Prostate gland (tissue), 2 donors: ENCODE measurements at regions of chr1 and their contacts with region 1.

Region 1: DNA sequence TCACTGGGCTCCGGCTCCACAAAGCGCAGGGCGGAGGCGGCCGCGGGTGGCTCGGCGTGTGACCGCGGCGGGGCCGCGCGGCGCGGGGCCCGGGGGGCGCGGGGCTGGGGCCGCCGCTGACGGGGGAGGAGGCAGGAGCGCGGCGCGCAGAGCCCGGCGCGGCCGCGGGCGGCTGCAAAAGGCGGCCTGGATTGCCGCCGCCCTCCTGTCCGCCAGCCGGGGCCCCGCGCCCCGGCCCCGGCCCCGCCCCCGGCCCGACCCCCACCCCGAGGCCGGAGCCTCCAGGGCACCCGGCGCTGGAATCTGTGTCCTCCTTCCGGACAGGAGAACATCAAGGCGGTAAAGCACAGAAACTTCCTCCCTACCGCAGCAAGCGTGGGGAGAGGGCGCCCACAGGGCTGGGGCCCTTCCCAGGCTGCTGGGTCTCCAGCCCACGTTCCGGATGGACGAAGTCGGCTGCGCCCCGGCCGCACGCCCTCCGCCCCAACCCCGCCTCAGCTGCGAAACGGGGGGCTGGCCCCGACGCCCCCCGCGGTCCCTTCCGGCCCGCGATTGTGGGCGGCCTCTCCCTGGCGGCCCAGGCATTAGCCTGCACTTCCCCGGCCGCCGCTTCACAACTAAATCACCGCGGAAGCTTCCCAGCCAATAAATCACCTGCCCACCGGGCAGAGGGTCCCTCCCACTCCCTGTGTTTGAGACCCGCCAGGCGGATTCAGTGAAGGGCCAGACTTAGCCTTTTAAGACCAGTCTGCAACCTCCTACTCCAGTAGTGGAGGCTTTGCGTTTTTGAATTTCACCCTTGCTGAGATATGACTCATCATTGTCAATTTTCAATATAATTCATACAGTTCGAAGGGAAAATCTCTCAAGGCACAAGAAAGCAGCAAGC is 106.0 kb downstream of the SLC45A1 start:
- DNase-seq: no peak
- H3K4me3 ChIP-seq: peak overlapping the region; percentile 79 to 84
- H3K27ac ChIP-seq: peak overlapping the region; percentile 93 to 98
- H3K4me1 ChIP-seq: peaks cover 22% of the 10 kb centered on the region
- H3K27me3 ChIP-seq: no peaks in the 10 kb centered on the region
- CTCF ChIP-seq: peak in 2 of 4 experiments; percentile 27
- POLR2A ChIP-seq: peak; percentile 11

Region 2: DNA sequence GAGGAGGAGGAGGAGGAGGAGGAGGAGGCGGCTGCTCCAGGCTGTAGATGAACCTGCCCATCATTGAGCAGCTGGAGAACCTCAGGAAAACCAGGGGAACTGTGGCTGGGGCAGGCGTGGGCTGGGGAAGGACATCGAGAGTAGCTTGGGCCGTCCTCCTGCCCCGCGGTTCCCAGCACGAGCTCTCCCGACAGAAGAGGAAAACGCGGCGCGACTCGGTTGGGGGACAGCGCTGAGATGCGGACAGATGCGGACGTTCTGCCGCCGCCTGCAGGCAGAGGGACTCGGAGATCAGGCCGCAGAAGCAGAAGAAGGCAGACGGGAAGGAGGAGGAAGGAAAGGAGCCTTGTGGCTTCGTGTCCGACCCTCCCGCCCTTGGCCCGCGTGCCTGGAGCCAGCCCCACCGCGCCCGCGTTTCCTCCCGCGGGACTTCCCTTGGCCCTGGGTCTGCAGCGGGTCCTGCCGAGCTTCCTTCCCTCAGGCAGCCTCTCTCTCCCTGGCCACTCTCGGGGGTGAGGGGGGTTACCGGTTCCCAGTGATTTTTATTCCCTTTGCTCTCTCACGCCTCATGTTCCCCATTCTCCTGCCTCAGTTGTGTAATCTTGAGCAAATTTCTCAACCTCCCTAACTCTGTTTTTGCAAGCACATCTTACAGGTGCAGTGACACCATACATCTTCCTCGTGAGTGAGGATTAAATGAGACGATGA is 481.5 kb before region 1 on chr1:
- intact Hi-C with region 1: no loop called
- DNase-seq: peak; percentile 14
- H3K4me3 ChIP-seq: no peak overlapping the region
- H3K27ac ChIP-seq: no peak overlapping the region
- H3K4me1 ChIP-seq: no peaks in the 10 kb centered on the region
- H3K27me3 ChIP-seq: no peaks in the 10 kb centered on the region
- CTCF ChIP-seq: peak in 2 of 4 experiments; percentile 20 to 27
- POLR2A ChIP-seq: no peak

Region 3: GRCh38 chr1:8364528-8365442 is 59.1 kb before region 1 on chr1:
- intact Hi-C with region 1: loop called (anchors 5 kb)
- DNase-seq: peak; percentile 85
- H3K4me3 ChIP-seq: no peak overlapping the region
- H3K27ac ChIP-seq: peak overlapping the region; percentile 50 to 82
- H3K4me1 ChIP-seq: peaks cover 25% of the 10 kb centered on the region
- H3K27me3 ChIP-seq: no peaks in the 10 kb centered on the region
- CTCF ChIP-seq: no peak
- POLR2A ChIP-seq: no peak

Region 4: DNA sequence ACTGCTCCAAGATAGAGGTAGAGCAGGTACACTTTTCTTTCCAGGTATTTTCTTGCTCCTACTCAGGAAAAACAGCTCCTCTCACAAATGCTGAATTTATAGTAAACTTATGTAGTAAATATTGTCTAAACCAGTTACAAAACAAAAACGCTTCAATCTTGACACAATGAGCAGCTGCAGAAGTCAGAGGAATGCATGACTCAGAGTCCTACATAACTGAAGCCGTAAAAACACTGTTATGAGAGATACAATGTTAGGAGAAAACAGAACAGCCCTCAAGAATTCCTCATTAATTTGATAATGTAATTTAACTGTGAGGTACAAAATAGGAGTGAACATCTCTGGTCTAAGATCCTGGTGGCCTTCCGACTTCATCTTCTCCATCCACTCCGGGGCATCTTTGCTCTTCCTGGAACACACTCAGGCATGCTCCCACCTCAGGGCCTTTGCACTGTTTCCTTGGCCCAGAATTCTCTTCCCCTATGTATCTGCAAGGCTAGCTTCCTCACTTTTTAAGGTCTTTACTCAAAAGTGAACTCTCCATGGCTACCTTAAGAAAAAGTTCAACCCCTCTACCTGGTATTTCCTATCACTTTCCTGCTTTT is 32.5 kb after region 1 on chr1:
- intact Hi-C with region 1: loop called (anchors 5 kb)
- DNase-seq: no peak
- H3K4me3 ChIP-seq: no peak overlapping the region
- H3K27ac ChIP-seq: peak overlapping the region; percentile 41 to 53
- H3K4me1 ChIP-seq: peaks cover 12% of the 10 kb centered on the region
- H3K27me3 ChIP-seq: no peaks in the 10 kb centered on the region
- CTCF ChIP-seq: no peak
- POLR2A ChIP-seq: no peak